ENCODE measurements at regions of chr16 and their contacts with region 1.

Region 1: GRCh38 chr16:3716831-3717234 is 491 bp downstream of the TRAP1 start:
- DNase-seq: peak; percentile 20
- ATAC-seq: peak; percentile 53
- H3K4me3 ChIP-seq: peak overlapping the region; percentile 99
- H3K27ac ChIP-seq: peak overlapping the region; percentile 43
- H3K4me1 ChIP-seq: peaks cover 10% of the 10 kb centered on the region
- H3K27me3 ChIP-seq: no peaks in the 10 kb centered on the region
- CTCF ChIP-seq: no peak

Region 2: GRCh38 chr16:3695610-3696369 is 21.0 kb before region 1 on chr16:
- CTCF ChIA-PET with region 1: no interaction called
- POLR2A ChIA-PET with region 1: interaction called, 14 read pairs
- intact Hi-C with region 1: no loop called
- DNase-seq: no peak
- ATAC-seq: no peak
- H3K4me3 ChIP-seq: no peak overlapping the region
- H3K27ac ChIP-seq: no peak overlapping the region
- H3K4me1 ChIP-seq: no peaks in the 10 kb centered on the region
- H3K27me3 ChIP-seq: no peaks in the 10 kb centered on the region
- CTCF ChIP-seq: no peak

Measured in PC-3 (cell line).